ENCODE measurements at regions of chr14 and their contacts with region 1.

Region 1: GRCh38 chr14:65003394-65003793 is 16.7 kb downstream of the FNTB start:
- DNase-seq: no peak
- H3K4me3 ChIP-seq: no peak overlapping the region
- H3K4me3 Mint-ChIP-seq: no peak overlapping the region
- H3K27ac Mint-ChIP-seq: no peak overlapping the region
- H3K4me1 ChIP-seq: no peaks in the 10 kb centered on the region; the same call in 1 of the 2 replicates
- H3K4me1 Mint-ChIP-seq: peaks cover under 1% of the 10 kb centered on the region
- H3K27me3 ChIP-seq: no peaks in the 10 kb centered on the region
- H3K27me3 Mint-ChIP-seq: no peaks in the 10 kb centered on the region
- CTCF ChIP-seq: no peak

Region 2: GRCh38 chr14:64928239-64929013 is 75.0 kb before region 1 on chr14:
- CTCF ChIA-PET with region 1: no interaction called
- POLR2A ChIA-PET with region 1: interaction called, 10 read pairs
- intact Hi-C with region 1: no loop called
- DNase-seq: no peak
- H3K4me3 ChIP-seq: no peak overlapping the region
- H3K4me3 Mint-ChIP-seq: no peak overlapping the region
- H3K27ac Mint-ChIP-seq: no peak overlapping the region
- H3K4me1 ChIP-seq: peaks cover 7% of the 10 kb centered on the region
- H3K4me1 Mint-ChIP-seq: peaks cover 6% of the 10 kb centered on the region
- H3K27me3 ChIP-seq: no peaks in the 10 kb centered on the region
- H3K27me3 Mint-ChIP-seq: no peaks in the 10 kb centered on the region
- CTCF ChIP-seq: no peak

Region 3: DNA sequence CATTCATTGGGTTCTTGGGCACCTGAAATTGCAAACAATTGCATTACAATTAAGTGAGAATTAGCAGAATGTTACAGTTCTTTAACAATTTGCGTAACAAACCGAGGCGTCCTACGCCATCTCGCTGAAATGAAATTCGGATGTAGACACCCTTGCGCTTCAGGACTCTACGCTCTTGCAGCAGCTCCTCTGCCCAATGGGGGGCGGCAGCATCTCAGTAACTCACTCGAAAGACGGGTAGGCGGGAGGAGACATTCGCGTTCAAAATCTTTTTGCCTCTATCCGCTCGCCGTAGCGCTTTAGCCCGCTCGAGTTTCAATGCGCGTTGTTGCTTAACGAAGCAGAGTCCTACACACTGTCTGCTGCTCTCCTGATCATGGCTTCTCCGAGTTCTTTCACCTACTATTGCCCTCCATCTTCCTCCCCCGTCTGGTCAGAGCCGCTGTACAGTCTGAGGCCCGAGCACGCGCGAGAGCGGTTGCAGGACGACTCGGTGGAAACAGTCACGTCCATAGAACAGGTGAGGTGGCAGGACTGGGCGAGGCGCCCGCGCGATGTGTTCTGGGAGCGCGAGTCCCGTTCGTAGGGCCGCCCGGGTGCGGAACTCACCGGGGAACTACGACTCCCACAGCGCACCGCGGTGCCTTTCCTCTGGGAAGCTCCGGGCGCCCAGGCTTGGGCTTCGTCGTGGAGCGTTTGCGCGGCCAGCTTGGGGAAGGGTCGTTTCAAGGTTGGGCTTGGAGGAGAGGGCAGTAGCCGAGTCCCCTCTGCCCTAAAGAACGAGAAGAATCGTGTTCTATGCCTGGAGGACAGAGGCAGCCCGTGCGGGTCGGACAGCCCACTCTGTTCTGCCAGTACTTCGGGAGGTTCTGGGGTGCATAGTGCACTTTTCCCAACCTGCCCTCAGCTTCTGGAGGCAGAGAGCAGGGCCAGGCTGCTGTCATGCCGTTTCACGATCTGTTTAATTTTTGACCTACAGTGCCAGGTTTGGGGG is 16.5 kb before region 1 on chr14 and contains the start of gene FNTB:
- CTCF ChIA-PET with region 1: no interaction called
- POLR2A ChIA-PET with region 1: no interaction called
- intact Hi-C with region 1: no loop called
- DNase-seq: peak; percentile 95 to 96
- H3K4me3 ChIP-seq: peak within 1 kb of the TSS; percentile 80
- H3K4me3 Mint-ChIP-seq: peak within 1 kb of the TSS; percentile 98
- H3K27ac Mint-ChIP-seq: peak within 1 kb of the TSS; percentile 99
- H3K4me1 ChIP-seq: no peaks in the 10 kb centered on the region
- H3K4me1 Mint-ChIP-seq: peaks cover 20% of the 10 kb centered on the region
- H3K27me3 ChIP-seq: no peaks in the 10 kb centered on the region
- H3K27me3 Mint-ChIP-seq: no peaks in the 10 kb centered on the region
- CTCF ChIP-seq: peak; percentile 69 to 88
- total RNA-seq, gene FNTB: 20.6 and 21.2 TPM in 2 replicates

Measured in Caco-2 (cell line).